G401 (cell line): ENCODE measurements at regions of chr9 and their contacts with region 1.

Region 1: DNA sequence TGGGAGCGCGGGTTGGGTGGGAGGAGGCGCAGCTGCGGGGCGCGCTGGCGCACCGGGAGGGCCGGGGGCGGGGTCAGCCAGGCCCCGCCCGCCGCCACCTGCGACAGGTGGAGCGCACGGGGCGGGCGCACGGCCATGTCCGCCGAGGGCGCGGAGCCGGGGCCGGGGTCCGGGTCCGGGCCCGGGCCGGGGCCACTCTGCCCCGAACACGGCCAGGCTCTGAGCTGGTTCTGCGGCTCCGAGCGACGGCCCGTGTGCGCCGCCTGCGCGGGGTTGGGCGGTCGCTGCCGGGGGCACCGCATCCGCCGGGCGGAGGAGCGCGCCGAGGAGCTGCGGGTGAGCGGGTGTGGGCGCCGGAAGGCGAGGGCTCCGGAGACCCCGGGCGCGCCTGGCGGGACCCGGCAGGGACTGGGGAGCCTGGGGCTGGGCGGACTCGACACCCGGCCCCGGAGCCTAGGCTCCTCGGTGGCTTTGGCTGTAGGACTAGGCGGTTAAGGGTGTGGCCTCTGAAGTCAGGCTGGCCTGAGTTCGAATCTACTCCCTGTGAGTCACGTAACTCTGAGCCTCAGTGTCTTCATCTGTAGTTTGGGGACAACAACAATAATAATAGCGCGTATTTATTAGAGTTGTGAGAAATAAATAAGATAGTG is at the start of gene BSPRY:
- DNase-seq: no peak
- total RNA-seq, gene BSPRY: 0.64 TPM in 1 of 2 replicates, not detected in the other

Region 2: GRCh38 chr9:113427629-113428028 is 78.1 kb after region 1 on chr9:
- in situ Hi-C with region 1: loop called (anchors 5 kb)
- DNase-seq: no peak

Region 3: DNA sequence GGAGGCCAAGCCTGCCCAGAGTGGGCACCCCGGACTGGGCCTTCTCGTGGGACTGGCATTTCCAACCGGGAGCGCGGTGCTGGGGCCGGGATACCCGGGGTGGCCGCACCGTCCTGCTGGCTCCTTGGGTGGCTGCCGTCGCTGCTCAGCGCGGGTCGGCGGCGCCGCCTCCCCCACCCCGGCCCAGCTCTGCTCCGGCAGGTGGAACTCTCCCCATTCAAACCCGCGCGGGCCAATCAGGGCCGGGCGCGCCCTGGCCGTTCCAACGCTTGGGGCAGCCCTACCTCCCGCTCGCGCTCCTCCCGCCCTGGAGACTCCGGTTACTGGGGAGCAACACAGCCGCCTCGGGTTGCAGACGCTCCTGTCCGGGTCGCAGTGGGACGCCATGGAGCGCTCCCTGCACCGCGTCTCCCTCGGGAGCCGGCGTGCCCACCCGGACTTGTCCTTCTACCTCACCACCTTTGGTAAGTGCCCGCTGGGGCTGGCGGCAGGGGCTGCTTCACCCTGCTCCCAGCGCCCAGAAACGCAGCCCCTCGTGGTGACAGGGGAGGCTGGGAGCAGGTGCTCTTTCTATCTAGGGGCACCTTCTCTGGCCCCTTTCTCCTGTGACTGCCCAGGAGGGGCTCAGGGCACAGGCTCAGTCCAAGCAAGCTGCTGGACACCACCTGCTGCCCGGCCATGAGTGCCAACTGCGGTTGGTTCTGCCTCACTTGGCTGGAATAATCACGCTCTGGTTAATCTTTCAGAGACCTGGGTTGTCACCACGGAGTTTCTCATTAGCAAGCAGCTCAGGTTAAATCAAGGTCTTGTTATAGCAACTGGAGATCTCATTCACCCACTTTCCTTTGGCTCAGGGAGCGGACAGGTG is 114.1 kb after region 1 on chr9 and contains the start of gene RGS3:
- in situ Hi-C with region 1: no loop called
- DNase-seq: peak; percentile 61
- total RNA-seq, gene RGS3: 117 and 144 TPM in 2 replicates

Region 4: GRCh38 chr9:113484258-113484730 is 134.7 kb after region 1 on chr9:
- in situ Hi-C with region 1: no loop called
- DNase-seq: peak; percentile 25